GM12878 (cell line): ENCODE measurements at regions of chr5 and their contacts with region 1.

Region 1: DNA sequence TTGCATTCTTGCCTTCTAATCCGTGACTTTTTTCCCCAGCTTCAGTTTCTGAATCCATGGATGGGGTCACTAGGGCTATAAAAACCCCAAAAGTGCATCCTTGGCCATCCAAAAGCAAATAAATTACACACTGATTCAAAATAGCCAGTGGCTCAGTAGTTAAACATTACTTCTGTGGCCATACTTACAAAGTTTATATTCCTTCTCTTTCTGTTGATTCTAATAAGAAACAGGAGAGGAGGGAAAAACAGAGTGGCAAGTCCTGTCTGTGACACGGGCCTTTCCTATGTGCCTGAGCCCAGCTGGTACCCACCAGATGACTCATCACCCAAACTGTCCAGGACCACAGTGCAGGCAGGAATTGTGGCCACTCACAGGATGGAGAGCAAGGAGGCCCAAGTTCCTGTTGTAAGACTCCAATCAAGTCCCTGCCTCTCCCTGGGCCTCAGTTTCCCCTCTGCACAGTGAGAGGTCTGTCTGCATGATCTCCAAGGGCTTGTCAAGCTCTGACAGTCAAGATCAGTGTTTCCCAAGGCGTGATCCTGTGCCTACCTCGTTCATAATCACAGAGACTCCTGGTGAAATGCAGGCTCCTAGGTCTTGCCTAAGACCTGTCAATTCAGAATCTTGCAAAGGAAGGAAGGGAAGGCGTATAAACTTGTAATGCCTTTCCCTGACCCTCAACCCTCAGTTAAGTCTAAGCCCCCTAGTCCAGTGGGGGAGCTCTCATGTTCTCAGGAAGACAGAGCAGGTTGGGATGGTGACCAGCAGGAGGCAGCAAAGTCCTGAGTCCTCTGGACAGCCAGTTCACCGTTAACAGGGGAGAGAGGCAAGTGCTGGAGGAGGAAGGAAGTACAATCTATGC is 29.5 kb downstream of the TNIP1 start:
- DNase-seq: peak; percentile 43
- ATAC-seq: peak; percentile 93
- H3K4me3 ChIP-seq: no peak overlapping the region
- H3K27ac ChIP-seq: no peak overlapping the region
- H3K4me1 ChIP-seq: no peaks in the 10 kb centered on the region; the same call in 1 of the 2 replicates
- H3K27me3 ChIP-seq: no peaks in the 10 kb centered on the region
- CTCF ChIP-seq: peak; percentile 86 to 87 (median 86)
- EP300 ChIP-seq: no peak
- POLR2A ChIP-seq: no peak
- RAD21 ChIP-seq: peak; percentile 91

Region 2: GRCh38 chr5:150295172-150295634 is 756.1 kb before region 1 on chr5:
- CTCF ChIA-PET with region 1: no interaction called
- POLR2A ChIA-PET with region 1: no interaction called
- RAD21 ChIA-PET with region 1: no interaction called
- SMC1A ChIA-PET with region 1: no interaction called
- in situ Hi-C with region 1: no loop called
- intact Hi-C with region 1: no loop called
- DNase-seq: no peak
- ATAC-seq: no peak
- H3K4me3 ChIP-seq: no peak overlapping the region
- H3K27ac ChIP-seq: no peak overlapping the region
- H3K4me1 ChIP-seq: no peaks in the 10 kb centered on the region
- H3K27me3 ChIP-seq: no peaks in the 10 kb centered on the region
- CTCF ChIP-seq: no peak
- EP300 ChIP-seq: no peak
- POLR2A ChIP-seq: no peak
- RAD21 ChIP-seq: no peak

Region 3: DNA sequence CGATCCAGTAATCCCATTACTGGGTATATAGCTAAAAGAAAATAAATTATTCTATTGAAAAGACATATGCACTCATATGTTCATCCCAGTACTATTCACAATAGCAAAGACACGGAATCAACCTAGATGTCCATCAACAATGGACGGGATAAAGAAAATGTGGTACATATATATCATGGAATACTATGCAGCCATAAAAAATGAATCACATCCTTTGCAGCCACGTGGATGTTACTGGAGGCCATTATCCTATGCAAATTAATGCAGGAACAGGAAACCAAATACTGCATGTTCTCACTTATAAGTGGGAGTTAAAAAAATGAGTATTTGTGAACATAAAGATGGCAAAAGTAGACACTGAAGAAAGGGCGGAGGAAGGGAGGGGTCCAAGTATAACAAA is 221.6 kb before region 1 on chr5:
- CTCF ChIA-PET with region 1: no interaction called
- POLR2A ChIA-PET with region 1: no interaction called
- RAD21 ChIA-PET with region 1: no interaction called
- SMC1A ChIA-PET with region 1: no interaction called
- in situ Hi-C with region 1: no loop called
- intact Hi-C with region 1: no loop called
- DNase-seq: no peak
- ATAC-seq: no peak
- H3K4me3 ChIP-seq: no peak overlapping the region
- H3K27ac ChIP-seq: no peak overlapping the region
- H3K4me1 ChIP-seq: no peaks in the 10 kb centered on the region
- H3K27me3 ChIP-seq: no peaks in the 10 kb centered on the region
- CTCF ChIP-seq: no peak
- EP300 ChIP-seq: no peak
- POLR2A ChIP-seq: no peak
- RAD21 ChIP-seq: no peak

Region 4: GRCh38 chr5:151068433-151069197 is 17.3 kb after region 1 on chr5:
- CTCF ChIA-PET with region 1: interaction called, 30 read pairs
- POLR2A ChIA-PET with region 1: interaction called, 4 read pairs
- RAD21 ChIA-PET with region 1: interaction called, 4 read pairs
- SMC1A ChIA-PET with region 1: interaction called, 22 read pairs
- in situ Hi-C with region 1: no loop called
- intact Hi-C with region 1: no loop called
- DNase-seq: no peak
- ATAC-seq: peak; percentile 78
- H3K4me3 ChIP-seq: peak overlapping the region; percentile 6; the same call in 1 of the 2 replicates
- H3K27ac ChIP-seq: peak overlapping the region; percentile 65
- H3K4me1 ChIP-seq: peaks cover 77% of the 10 kb centered on the region
- H3K27me3 ChIP-seq: no peaks in the 10 kb centered on the region
- CTCF ChIP-seq: no peak
- EP300 ChIP-seq: peak in 1 of 2 experiments; percentile 16; a peak in 1 of 4 replicates
- POLR2A ChIP-seq: no peak; the same call in none of the 2 replicates
- RAD21 ChIP-seq: no peak

Region 5: DNA sequence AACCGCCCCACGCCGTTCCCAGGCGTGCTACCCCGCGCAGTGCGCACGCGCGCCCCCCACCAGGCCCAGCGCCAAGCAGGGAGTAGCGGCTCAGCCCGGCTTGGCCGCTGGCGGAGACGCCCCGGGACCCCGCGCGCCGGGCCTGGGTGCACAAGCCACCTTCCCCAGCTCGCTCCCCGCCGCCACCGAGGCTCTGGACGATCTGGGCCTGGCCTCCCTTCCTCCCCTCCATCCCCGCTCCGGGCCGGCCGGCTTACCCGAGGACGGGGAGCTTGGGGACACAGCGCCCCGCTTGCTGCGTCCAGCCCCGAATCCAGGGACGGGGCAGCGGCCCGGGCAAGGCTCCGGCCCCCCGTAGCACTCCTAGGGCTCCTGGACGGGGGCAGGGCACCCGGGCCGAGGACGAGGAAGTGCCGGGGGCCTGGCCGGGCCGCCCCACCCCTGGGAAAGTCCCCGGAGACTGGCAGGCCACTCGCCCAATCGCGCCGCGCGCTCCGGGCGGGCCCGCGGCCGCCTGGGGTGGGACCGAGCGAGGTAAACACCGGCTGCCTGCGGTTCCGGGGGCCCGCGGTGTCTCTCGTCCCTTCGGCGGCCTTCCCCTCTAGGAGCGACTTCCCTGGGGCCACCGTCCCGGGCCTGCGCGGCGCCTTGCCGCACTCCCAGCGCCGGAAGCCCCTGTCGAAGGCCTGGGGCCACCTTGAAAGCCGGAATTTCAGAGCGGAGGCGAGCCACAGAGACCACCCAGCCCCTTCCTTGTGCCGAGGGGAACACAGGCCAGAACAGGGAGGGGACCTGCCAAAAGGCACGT is 29.5 kb after region 1 on chr5 and contains the start of gene TNIP1:
- CTCF ChIA-PET with region 1: interaction called, 30 read pairs
- POLR2A ChIA-PET with region 1: interaction called, 4 read pairs
- RAD21 ChIA-PET with region 1: interaction called, 10 read pairs
- SMC1A ChIA-PET with region 1: interaction called, 26 read pairs
- in situ Hi-C with region 1: no loop called
- intact Hi-C with region 1: no loop called
- DNase-seq: no peak
- ATAC-seq: peak; percentile 78
- H3K4me3 ChIP-seq: peak within 1 kb of the TSS; percentile 89
- H3K27ac ChIP-seq: peak within 1 kb of the TSS; percentile 90
- H3K4me1 ChIP-seq: peaks cover 44% of the 10 kb centered on the region
- H3K27me3 ChIP-seq: no peaks in the 10 kb centered on the region
- CTCF ChIP-seq: no peak
- EP300 ChIP-seq: no peak; a peak in 1 of 4 replicates
- POLR2A ChIP-seq: peak; percentile 89
- RAD21 ChIP-seq: no peak
- polyA plus RNA-seq, gene TNIP1: 4.4 to 13.7 TPM

Region 6: DNA sequence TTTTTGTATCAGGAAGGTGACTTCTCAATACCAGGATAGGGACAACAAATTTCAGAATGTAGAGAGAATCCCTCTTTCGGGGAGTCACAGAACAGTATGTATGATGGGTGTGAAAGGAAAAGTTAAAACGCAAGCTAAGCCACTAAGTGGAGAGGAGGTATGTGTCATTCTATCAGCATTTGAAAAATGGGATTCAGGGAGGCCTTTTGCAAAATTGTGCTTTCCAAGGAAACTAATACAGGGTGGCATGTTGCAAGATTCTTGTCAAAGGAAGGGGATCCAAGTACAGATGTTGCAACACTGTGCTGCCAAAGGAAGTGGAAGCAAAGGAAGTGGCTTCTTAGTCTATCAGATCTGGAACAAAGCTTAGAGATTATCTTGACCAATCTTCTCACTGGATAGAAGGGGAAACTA is 42.2 kb after region 1 on chr5:
- CTCF ChIA-PET with region 1: interaction called, 35 read pairs
- POLR2A ChIA-PET with region 1: no interaction called
- RAD21 ChIA-PET with region 1: interaction called, 13 read pairs
- SMC1A ChIA-PET with region 1: interaction called, 25 read pairs
- in situ Hi-C with region 1: no loop called
- intact Hi-C with region 1: no loop called
- DNase-seq: no peak
- ATAC-seq: peak; percentile 2; the same call in 2 of the 3 replicates
- H3K4me3 ChIP-seq: peak overlapping the region; percentile 53
- H3K27ac ChIP-seq: peak overlapping the region; percentile 98
- H3K4me1 ChIP-seq: peaks cover 59% of the 10 kb centered on the region
- H3K27me3 ChIP-seq: no peaks in the 10 kb centered on the region
- CTCF ChIP-seq: no peak
- EP300 ChIP-seq: no peak
- POLR2A ChIP-seq: no peak
- RAD21 ChIP-seq: no peak

Region 7: GRCh38 chr5:151110122-151110681 is 58.9 kb after region 1 on chr5:
- CTCF ChIA-PET with region 1: interaction called, 691 read pairs
- POLR2A ChIA-PET with region 1: interaction called, 23 read pairs
- RAD21 ChIA-PET with region 1: interaction called, 178 read pairs
- SMC1A ChIA-PET with region 1: interaction called, 279 read pairs
- in situ Hi-C with region 1: no loop called
- intact Hi-C with region 1: loop called (anchors 1 kb)
- DNase-seq: no peak
- ATAC-seq: peak; percentile 69
- H3K4me3 ChIP-seq: no peak overlapping the region
- H3K27ac ChIP-seq: peak overlapping the region; percentile 72
- H3K4me1 ChIP-seq: peaks cover 25% of the 10 kb centered on the region
- H3K27me3 ChIP-seq: no peaks in the 10 kb centered on the region
- CTCF ChIP-seq: no peak; a peak in 3 of 6 replicates
- EP300 ChIP-seq: no peak
- POLR2A ChIP-seq: no peak; the same call in 1 of the 2 replicates
- RAD21 ChIP-seq: peak; percentile 42

Region 8: DNA sequence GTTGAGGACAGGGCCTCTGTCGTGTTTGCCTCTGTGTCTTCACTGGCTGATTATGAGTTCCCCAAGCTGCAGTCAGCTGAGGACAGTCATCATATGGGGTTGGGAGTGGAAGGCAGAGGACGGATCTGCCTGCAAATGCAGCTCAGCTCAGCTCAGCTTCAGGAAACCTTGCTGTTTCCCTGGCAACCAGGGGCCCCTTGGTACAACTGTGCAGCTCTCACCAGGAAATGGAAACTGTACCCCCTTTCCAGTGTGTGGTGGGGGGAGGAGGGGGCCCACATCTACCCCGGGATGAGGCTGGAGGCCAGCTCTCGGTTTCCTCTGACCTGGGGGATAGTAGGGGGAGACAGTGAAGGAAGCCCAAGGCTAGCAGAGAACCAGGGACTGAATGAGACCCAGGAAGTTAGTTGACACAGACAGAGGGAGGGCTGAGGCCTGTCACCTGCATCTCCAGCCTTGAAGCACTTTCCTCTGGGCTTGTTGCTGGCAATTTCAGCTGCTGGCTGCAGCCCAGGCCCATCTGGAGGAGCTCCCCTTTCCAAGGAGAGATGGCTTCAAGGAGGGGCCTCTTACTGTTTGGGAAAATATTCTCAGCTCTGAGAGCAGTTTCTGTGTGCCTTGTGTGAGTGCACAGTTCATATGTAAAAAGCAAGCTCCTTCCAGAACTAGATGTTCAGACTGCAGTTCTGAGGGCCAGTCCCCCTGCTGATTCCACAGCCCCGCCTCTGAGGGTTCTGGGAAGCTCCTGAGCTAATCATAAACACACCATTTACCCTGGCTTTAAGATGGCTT is 99.4 kb after region 1 on chr5:
- CTCF ChIA-PET with region 1: interaction called, 11 read pairs
- POLR2A ChIA-PET with region 1: no interaction called
- RAD21 ChIA-PET with region 1: interaction called, 4 read pairs
- SMC1A ChIA-PET with region 1: interaction called, 3 read pairs
- in situ Hi-C with region 1: no loop called
- intact Hi-C with region 1: no loop called
- DNase-seq: peak; percentile 50
- ATAC-seq: peak; percentile 51
- H3K4me3 ChIP-seq: peak overlapping the region; percentile 57
- H3K27ac ChIP-seq: peak overlapping the region; percentile 89
- H3K4me1 ChIP-seq: peaks cover 62% of the 10 kb centered on the region
- H3K27me3 ChIP-seq: no peaks in the 10 kb centered on the region
- CTCF ChIP-seq: no peak
- EP300 ChIP-seq: no peak
- POLR2A ChIP-seq: peak; percentile 70
- RAD21 ChIP-seq: no peak

Region 9: DNA sequence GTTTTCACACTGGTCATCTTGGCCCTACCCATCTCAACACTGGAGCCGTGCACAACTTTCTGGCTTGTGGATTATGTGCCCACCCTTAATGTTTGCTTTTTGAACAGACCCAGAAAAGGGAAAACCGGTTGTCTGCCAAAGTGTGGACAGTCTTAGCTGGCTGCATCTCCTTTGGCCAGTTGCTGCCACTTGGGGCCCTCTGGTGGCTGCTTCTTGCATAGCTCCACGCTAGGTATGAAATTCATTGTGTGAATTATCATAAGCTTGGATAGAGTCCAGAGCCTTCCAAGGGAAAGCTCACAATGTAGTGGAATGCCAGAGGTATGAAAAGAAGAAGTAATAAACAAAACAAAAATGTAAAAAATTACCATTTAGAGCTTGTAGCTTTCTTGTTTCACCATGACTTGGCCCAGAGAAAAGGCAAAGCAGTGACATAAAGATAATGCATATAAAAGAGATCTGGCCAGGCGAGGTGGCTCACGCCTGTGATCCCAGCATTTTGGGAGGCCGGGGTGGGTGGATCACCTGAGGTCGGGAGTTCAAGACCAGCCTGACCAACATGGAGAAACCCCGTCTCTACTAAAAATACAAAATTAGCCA is 264.8 kb after region 1 on chr5:
- CTCF ChIA-PET with region 1: interaction called, 4 read pairs
- POLR2A ChIA-PET with region 1: no interaction called
- RAD21 ChIA-PET with region 1: interaction called, 5 read pairs
- SMC1A ChIA-PET with region 1: interaction called, 7 read pairs
- in situ Hi-C with region 1: no loop called
- intact Hi-C with region 1: loop called (anchors 5 kb)
- DNase-seq: peak; percentile 7
- ATAC-seq: peak; percentile 95
- H3K4me3 ChIP-seq: no peak overlapping the region
- H3K27ac ChIP-seq: no peak overlapping the region
- H3K4me1 ChIP-seq: no peaks in the 10 kb centered on the region
- H3K27me3 ChIP-seq: no peaks in the 10 kb centered on the region; a peak in 1 of 4 replicates
- CTCF ChIP-seq: peak; percentile 93 to 95 (median 94); a peak in 5 of 6 replicates
- EP300 ChIP-seq: no peak
- POLR2A ChIP-seq: no peak
- RAD21 ChIP-seq: peak; percentile 86

Region 10: DNA sequence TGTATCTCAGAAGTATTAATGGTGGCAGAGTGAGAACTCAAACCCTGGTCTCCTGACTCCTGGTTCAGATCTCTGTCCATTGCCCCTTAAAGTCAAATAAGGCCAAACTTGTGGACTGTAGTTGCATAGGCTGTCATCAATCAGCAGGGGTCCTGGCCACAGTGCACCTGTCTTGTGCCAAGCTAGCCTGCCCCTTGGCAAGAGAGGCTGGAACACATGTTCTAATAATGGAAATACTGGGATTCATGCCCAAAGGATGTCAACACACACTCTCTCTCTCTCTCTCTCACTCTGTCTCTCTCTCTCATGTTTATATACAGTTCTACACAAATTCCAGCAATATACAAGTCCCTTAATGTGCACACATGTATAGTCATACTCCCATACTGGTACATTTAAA is 829.0 kb after region 1 on chr5:
- CTCF ChIA-PET with region 1: no interaction called
- POLR2A ChIA-PET with region 1: no interaction called
- RAD21 ChIA-PET with region 1: no interaction called
- SMC1A ChIA-PET with region 1: no interaction called
- in situ Hi-C with region 1: no loop called
- intact Hi-C with region 1: no loop called
- DNase-seq: no peak
- ATAC-seq: no peak
- H3K4me3 ChIP-seq: no peak overlapping the region
- H3K27ac ChIP-seq: no peak overlapping the region
- H3K4me1 ChIP-seq: no peaks in the 10 kb centered on the region
- H3K27me3 ChIP-seq: no peaks in the 10 kb centered on the region
- CTCF ChIP-seq: no peak
- EP300 ChIP-seq: no peak
- POLR2A ChIP-seq: no peak
- RAD21 ChIP-seq: no peak